CD8-positive, alpha-beta T cell (primary cell): ENCODE measurements at regions of chr18 and their contacts with region 1.

Region 1: DNA sequence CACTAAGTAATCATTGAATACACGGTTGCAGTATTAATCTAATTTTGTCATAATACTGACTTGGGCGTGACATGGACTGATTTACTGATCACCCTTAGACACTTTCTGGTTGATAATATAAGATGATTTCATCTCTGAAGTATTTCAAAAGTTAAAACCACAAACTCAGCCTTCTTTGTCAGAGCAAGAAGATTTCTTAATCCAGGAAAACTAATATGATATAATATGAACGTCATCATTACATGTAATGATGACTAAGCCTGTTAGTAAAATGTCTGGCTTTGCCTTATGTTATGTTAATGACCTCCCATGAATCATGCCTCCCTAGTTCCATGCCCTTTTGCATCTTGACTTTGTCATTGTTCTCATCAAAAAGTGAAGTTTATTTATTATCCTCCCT is 1325.0 kb upstream of the CDH2 start:
- DNase-seq: no peak
- ATAC-seq: no peak
- H3K4me3 ChIP-seq: no peak overlapping the region
- H3K4me3 Mint-ChIP-seq: no peak overlapping the region
- H3K27ac ChIP-seq: no peak overlapping the region
- H3K27ac Mint-ChIP-seq: no peak overlapping the region
- H3K4me1 ChIP-seq: no peaks in the 10 kb centered on the region
- H3K4me1 Mint-ChIP-seq: no peaks in the 10 kb centered on the region
- H3K27me3 ChIP-seq: no peaks in the 10 kb centered on the region
- H3K27me3 Mint-ChIP-seq: no peaks in the 10 kb centered on the region
- CTCF ChIP-seq: no peak

Region 2: DNA sequence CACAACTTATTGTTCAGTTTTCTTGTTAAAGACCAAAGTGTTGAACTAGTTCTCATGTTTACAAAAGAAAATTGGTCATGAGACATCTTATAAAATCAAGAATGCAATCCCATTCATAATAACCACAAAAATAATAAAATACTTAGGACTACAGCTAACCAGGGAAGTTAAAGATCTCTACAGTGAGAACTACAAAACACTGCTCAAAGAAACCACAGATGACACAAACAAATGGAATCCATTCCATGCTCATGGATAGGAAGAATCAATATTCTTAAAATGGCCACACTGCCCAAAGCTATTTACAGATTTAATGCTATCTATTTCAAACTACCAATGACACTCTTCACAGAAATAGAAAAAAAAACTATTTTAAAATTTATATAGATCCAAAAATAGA is 29.8 kb after region 1 on chr18:
- CTCF ChIA-PET with region 1: no interaction called
- POLR2A ChIA-PET with region 1: no interaction called
- intact Hi-C with region 1: loop called in 1 of 2 experiments (anchors 5 kb)
- DNase-seq: no peak
- ATAC-seq: no peak
- H3K4me3 ChIP-seq: no peak overlapping the region
- H3K4me3 Mint-ChIP-seq: no peak overlapping the region
- H3K27ac ChIP-seq: no peak overlapping the region
- H3K27ac Mint-ChIP-seq: no peak overlapping the region
- H3K4me1 ChIP-seq: no peaks in the 10 kb centered on the region
- H3K4me1 Mint-ChIP-seq: no peaks in the 10 kb centered on the region
- H3K27me3 ChIP-seq: no peaks in the 10 kb centered on the region
- H3K27me3 Mint-ChIP-seq: no peaks in the 10 kb centered on the region
- CTCF ChIP-seq: no peak